Left ventricle myocardium superior (tissue), 1 donor: ENCODE measurements at regions of chr3 and their contacts with region 1.

Region 1: GRCh38 chr3:151918253-151919029 is 45.0 kb downstream of the SUCNR1 start:
- DNase-seq: no peak
- ATAC-seq: peak; percentile 48

Region 2: DNA sequence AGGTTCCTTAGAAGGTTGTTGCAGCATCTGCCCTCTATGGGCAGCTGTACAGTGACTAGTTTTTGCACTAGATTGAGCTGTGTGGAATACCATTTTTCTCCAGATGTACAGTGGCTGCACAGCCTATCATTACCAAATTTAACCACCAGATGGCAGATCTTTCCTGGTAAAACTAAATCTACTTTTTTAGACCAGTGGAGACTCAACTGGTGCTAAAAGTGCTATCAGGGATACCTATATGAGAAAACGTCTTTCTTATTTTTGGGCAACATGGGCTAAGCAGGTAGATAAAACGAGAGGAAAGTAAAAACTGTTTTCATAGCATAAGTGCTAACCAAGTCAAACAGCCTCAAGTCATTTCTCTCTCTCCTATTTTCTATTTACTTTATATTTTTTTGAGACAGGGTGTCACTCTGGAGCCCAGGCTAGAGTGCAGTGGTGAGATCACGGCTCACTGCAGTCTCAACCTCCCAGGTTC is 478.8 kb before region 1 on chr3:
- intact Hi-C with region 1: loop called (anchors 10 kb)
- DNase-seq: no peak
- ATAC-seq: peak; percentile 76